A549 (cell line): ENCODE measurements at regions of chr1 and their contacts with region 1.

Region 1: DNA sequence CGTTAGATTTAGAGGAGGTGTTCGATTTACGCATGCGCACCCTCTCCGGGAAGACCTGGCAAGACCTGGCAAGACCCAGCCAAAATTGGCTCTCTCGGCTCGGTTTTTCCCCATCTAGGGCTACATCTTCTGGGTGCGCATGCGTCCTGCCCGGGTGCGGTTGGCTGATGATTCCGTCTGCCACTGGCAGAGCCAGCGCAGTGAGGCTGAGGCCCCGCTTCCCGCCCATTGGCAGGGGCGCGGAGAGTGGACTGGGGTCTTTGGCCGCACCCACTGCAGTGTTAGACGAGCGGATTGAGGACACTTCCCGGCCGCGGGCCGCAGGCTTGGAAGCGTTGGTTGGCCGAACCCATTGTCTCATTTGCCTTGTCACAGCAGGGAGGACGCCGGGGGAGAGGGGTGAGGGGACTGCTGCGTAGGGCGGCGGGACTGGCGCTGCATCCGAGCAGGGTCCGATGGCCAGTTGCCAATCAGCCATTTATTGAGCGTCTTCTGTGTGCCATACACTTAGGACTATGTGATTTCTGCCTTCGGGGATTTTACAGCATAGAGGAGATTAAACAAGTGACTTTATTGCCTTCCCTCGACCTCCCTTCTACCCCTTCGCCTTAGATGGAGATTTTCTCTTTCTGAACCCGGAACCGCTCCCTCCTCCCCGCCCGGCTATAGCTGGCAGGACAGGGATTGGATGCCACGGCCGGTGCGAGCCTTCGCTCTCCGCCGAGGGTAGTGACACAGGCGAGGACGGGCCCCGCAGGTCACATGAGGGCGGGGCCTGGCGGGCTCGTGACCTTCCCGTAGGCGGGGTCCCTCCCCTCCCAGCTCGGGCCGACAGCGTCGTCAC is 43.7 kb downstream of the MEF2D start:
- DNase-seq: peak; percentile 99
- ATAC-seq: peak; percentile 80 to 90
- H3K4me3 ChIP-seq: peak overlapping the region; percentile 60
- H3K27ac ChIP-seq: peak overlapping the region; percentile 97 to 98
- H3K4me1 ChIP-seq: peaks cover 13% of the 10 kb centered on the region
- CTCF ChIP-seq: no peak
- EP300 ChIP-seq: no peak
- POLR2A ChIP-seq: peak; percentile 89
- RAD21 ChIP-seq: no peak

Region 2: GRCh38 chr1:156212833-156213643 is 243.8 kb before region 1 on chr1 and contains the start of gene PMF1:
- CTCF ChIA-PET with region 1: no interaction called
- POLR2A ChIA-PET with region 1: no interaction called
- DNase-seq: peak; percentile 96 to 100
- ATAC-seq: peak; percentile 98
- H3K4me3 ChIP-seq: peak within 1 kb of the TSS; percentile 65
- H3K27ac ChIP-seq: peak within 1 kb of the TSS; percentile 93 to 96
- H3K4me1 ChIP-seq: peaks cover 13% of the 10 kb centered on the region; the same call in 2 of the 3 replicates
- CTCF ChIP-seq: no peak
- EP300 ChIP-seq: no peak
- POLR2A ChIP-seq: peak; percentile 67
- RAD21 ChIP-seq: no peak
- polyA plus RNA-seq, gene PMF1: 61.4 and 63.9 TPM in 2 replicates

Region 3: GRCh38 chr1:156480411-156481192 is 23.8 kb after region 1 on chr1:
- CTCF ChIA-PET with region 1: interaction called, 44 read pairs
- POLR2A ChIA-PET with region 1: interaction called, 7 read pairs
- DNase-seq: peak; percentile 59 to 83
- ATAC-seq: peak; percentile 36 to 78; a peak in 3 of 6 replicates
- H3K4me3 ChIP-seq: no peak overlapping the region
- H3K27ac ChIP-seq: peak overlapping the region in 1 of 2 experiments; percentile 42; a peak in 2 of 6 replicates
- H3K4me1 ChIP-seq: peaks cover 29% of the 10 kb centered on the region
- CTCF ChIP-seq: peak; percentile 64
- EP300 ChIP-seq: no peak
- POLR2A ChIP-seq: no peak
- RAD21 ChIP-seq: peak; percentile 53 to 57

Region 4: DNA sequence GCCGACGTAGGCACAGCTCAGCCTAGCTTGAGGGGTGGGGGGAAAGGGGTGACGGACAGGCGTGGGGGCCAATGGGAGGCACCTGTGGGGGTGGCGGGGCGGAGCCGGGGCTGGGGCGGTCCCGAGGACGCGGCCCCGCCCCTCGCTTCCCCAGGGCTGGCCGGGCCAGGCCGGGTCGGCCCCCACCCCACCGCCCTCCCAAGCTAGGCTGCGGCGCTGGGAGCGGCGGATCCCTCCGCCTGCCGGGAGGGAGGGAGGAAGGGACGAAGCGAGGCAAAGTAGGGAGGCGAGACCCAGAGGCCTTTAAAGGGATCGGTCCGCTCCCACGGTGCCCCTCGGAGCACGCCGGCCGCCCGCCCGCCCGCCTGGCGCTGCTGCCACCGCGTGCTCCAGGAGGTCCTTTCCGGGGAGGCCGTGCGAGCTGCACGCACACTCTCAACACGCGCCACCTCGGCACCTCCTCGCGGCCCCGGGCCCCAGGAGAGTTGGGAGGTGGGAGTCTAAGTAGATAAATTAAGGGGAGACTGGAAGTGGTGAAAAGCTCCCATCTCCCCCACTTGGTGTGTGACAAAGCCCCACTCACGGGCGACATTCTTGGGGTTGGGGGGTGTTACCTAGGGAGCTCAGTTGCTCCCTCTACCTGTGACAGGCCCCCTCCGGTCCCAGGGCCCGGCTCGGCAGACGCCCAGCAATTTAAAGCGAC is 44.1 kb after region 1 on chr1:
- CTCF ChIA-PET with region 1: interaction called, 55 read pairs
- POLR2A ChIA-PET with region 1: interaction called, 130 read pairs
- DNase-seq: peak; percentile 91 to 98
- ATAC-seq: peak; percentile 58 to 70
- H3K4me3 ChIP-seq: peak overlapping the region; percentile 98
- H3K27ac ChIP-seq: peak overlapping the region; percentile 98 to 100
- H3K4me1 ChIP-seq: peaks cover 70% of the 10 kb centered on the region
- CTCF ChIP-seq: peak; percentile 55
- EP300 ChIP-seq: peak in 1 of 2 experiments; percentile 32; a peak in 1 of 5 replicates
- POLR2A ChIP-seq: peak; percentile 57
- RAD21 ChIP-seq: peak in 1 of 2 experiments; percentile 31; a peak in 2 of 5 replicates

Region 5: DNA sequence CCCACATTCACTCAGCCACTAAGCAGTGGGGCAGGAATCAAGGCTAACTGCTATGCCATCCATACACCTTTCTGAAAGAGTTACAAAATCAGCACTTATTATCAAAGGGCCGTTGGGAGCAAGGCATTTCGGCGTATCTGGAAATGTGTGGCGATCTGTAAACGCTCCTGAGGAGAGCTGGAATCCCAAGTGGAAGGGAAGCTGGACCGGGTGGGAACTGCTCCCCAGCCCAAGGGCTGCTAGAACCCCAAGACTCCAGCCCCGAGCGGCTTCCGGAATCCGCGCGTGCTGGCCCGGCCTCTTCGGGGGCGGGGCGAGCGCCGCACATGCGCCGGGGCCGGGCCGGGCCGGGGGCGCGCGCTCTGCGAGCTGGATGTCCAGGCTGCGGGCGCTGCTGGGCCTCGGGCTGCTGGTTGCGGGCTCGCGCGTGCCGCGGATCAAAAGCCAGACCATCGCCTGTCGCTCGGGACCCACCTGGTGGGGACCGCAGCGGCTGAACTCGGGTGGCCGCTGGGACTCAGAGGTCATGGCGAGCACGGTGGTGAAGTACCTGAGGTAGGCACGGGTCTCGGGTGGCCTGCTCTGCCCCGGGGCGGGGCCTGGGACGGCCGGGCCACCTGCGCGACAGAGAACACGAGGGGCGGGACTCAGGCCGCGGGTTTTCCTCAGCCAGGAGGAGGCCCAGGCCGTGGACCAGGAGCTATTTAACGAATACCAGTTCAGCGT is 134.8 kb after region 1 on chr1 and contains the start of gene NAXE:
- CTCF ChIA-PET with region 1: interaction called, 6 read pairs
- POLR2A ChIA-PET with region 1: interaction called, 18 read pairs
- DNase-seq: peak; percentile 57 to 79
- ATAC-seq: peak; percentile 76 to 89
- H3K4me3 ChIP-seq: peak within 1 kb of the TSS; percentile 72
- H3K27ac ChIP-seq: peak within 1 kb of the TSS; percentile 94 to 98
- H3K4me1 ChIP-seq: peaks cover 10% of the 10 kb centered on the region; the same call in 2 of the 3 replicates
- CTCF ChIP-seq: no peak
- EP300 ChIP-seq: no peak
- POLR2A ChIP-seq: peak; percentile 91
- RAD21 ChIP-seq: no peak
- polyA plus RNA-seq, gene NAXE: 81.4 and 109 TPM in 2 replicates